Motor neuron (in vitro differentiated cells): ENCODE measurements at regions of chr9 and their contacts with region 1.

Region 1: GRCh38 chr9:92133949-92134604 is 18.9 kb upstream of the SPTLC1 start:
- ATAC-seq: peak; percentile 76 to 93 (median 84)
- H3K4me3 ChIP-seq: no peak overlapping the region
- H3K27ac ChIP-seq: no peak overlapping the region
- H3K4me1 ChIP-seq: peaks cover 2 to 8% of the 10 kb centered on the region in 2 donors

Region 2: DNA sequence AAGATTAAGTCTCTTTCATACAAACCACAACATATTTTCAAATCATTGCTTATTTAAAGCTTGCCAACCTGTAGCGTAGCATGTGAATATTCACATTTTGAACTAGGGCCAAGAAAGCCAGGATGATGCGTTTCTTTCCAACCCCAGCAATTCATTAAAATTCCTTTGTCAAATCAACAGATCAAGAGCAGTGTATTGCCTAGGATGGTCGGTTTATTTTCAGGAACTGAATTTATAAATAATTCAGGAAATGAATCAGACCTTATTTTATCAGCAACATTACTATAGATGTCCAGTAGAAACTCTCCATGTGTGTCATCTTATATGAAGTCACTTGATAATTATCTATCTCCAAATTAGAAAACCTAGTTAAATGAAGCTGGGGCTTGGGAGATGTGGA is 759.1 kb before region 1 on chr9:
- in situ Hi-C with region 1: no loop called
- ATAC-seq: peak in 3 of 8 experiments; percentile 44 to 62 (median 58)
- H3K4me3 ChIP-seq: no peak overlapping the region
- H3K27ac ChIP-seq: no peak overlapping the region
- H3K4me1 ChIP-seq: no peaks in the 10 kb centered on the region

Region 3: GRCh38 chr9:92242260-92243136 is 108.4 kb after region 1 on chr9:
- in situ Hi-C with region 1: loop called in 4 of 9 experiments (anchors 25 kb)
- ATAC-seq: peak in 3 of 8 experiments; percentile 38 to 59 (median 52)
- H3K4me3 ChIP-seq: no peak overlapping the region
- H3K27ac ChIP-seq: no peak overlapping the region
- H3K4me1 ChIP-seq: no peaks in the 10 kb centered on the region

Region 4: DNA sequence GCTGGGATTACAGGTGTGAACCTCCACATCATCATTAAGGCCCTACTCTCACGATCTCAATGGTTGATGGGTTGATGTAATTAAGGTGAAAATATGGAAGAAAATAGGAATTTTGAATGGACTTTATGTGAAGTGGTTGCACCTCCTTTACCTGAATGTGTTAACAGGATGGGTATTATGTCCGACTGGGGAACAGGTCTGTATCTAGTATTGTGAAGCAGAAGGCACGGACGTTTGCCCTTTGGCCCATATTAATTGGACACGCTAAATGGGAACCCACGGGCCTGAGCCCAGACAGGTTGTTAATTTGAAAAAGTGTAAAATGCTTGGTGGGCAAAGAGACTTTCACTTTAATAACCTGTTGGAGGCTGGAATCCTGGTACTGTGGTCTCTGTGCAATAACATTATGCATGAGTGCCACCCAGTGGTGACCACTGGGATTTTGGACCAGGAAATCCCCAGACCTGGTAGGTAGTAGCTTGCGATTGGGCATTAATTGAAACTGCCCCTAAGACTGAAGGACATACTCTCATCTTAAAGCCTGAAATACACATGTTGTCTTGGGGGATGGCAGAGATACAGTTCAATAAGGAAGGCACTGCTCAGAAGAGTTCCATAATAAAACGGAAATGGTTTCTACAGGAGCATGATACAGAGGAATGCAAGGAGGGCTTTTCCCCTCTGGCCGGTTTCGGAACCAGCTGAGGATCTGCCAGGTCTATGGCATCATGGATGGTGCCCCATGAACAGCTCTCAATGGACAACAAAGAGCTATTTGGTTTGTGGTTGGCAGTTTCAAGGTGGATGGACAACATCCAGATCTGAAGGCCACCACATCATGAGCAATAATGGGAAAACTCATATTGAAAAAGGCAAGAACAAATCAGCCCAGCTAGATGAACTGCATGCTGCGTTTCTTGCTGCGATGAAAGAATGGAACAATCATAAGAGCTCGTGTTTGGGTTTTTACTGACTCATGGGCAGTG is 656.8 kb after region 1 on chr9:
- in situ Hi-C with region 1: loop called in 4 of 9 experiments (anchors 25 kb)
- ATAC-seq: peak; percentile 85 to 99 (median 90)
- H3K4me3 ChIP-seq: no peak overlapping the region
- H3K27ac ChIP-seq: no peak overlapping the region
- H3K4me1 ChIP-seq: no peaks in the 10 kb centered on the region